ENCODE measurements at regions of chr4 and their contacts with region 1.

Region 1: GRCh38 chr4:5998333-5998936 is 19.8 kb downstream of the C4orf50 start:
- DNase-seq: peak; percentile 77
- CTCF ChIP-seq: peak; percentile 85

Region 2: GRCh38 chr4:5664778-5665177 is 333.7 kb before region 1 on chr4:
- CTCF ChIA-PET with region 1: no interaction called
- POLR2A ChIA-PET with region 1: no interaction called
- DNase-seq: no peak
- CTCF ChIP-seq: no peak

Region 3: DNA sequence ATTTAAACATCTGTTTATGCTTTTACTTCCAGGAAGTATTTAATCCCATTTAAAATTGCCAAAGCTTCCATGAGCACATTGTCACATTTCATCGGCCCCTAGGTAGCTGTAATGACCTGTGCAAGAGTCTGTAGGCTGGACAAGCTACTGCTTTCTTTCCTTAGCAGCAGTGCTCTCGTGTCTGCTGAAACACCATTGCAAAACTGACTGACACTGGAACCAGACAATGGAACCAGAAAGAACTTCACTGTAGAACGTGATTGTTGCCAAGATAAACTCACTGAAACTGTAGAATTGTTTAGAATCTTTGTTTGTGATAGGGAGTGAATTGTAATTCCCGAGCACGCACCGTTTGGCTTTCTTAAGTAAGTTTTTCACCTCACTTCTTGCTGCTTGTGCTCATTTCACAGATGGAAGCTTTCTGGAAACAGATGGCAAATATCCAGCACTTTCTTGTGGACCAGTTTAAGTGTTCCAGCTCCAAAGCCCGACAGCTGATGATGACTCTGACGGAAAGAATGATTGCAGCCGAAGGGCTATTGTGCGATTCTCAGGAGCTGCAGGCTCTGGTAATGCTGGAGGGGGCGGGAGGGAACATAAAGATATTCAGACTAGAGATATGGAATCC is 250.6 kb before region 1 on chr4:
- CTCF ChIA-PET with region 1: no interaction called
- POLR2A ChIA-PET with region 1: no interaction called
- DNase-seq: no peak
- CTCF ChIP-seq: no peak

Region 4: GRCh38 chr4:5900844-5901243 is 97.6 kb before region 1 on chr4:
- CTCF ChIA-PET with region 1: no interaction called
- POLR2A ChIA-PET with region 1: no interaction called
- DNase-seq: no peak
- CTCF ChIP-seq: no peak

Region 5: GRCh38 chr4:5940470-5941203 is 57.8 kb before region 1 on chr4:
- CTCF ChIA-PET with region 1: no interaction called
- POLR2A ChIA-PET with region 1: no interaction called
- DNase-seq: no peak
- CTCF ChIP-seq: no peak

Region 6: GRCh38 chr4:5963611-5964010 is 34.8 kb before region 1 on chr4:
- CTCF ChIA-PET with region 1: interaction called, 10 read pairs
- POLR2A ChIA-PET with region 1: no interaction called
- DNase-seq: no peak
- CTCF ChIP-seq: no peak

Region 7: GRCh38 chr4:5988086-5988845 is 10.2 kb before region 1 on chr4:
- CTCF ChIA-PET with region 1: interaction called, 29 read pairs
- POLR2A ChIA-PET with region 1: no interaction called
- DNase-seq: no peak
- CTCF ChIP-seq: no peak

Region 8: GRCh38 chr4:6019316-6020263 is 21.2 kb after region 1 on chr4:
- CTCF ChIA-PET with region 1: interaction called, 44 read pairs
- POLR2A ChIA-PET with region 1: no interaction called
- DNase-seq: peak; percentile 67
- CTCF ChIP-seq: peak; percentile 73

Region 9: DNA sequence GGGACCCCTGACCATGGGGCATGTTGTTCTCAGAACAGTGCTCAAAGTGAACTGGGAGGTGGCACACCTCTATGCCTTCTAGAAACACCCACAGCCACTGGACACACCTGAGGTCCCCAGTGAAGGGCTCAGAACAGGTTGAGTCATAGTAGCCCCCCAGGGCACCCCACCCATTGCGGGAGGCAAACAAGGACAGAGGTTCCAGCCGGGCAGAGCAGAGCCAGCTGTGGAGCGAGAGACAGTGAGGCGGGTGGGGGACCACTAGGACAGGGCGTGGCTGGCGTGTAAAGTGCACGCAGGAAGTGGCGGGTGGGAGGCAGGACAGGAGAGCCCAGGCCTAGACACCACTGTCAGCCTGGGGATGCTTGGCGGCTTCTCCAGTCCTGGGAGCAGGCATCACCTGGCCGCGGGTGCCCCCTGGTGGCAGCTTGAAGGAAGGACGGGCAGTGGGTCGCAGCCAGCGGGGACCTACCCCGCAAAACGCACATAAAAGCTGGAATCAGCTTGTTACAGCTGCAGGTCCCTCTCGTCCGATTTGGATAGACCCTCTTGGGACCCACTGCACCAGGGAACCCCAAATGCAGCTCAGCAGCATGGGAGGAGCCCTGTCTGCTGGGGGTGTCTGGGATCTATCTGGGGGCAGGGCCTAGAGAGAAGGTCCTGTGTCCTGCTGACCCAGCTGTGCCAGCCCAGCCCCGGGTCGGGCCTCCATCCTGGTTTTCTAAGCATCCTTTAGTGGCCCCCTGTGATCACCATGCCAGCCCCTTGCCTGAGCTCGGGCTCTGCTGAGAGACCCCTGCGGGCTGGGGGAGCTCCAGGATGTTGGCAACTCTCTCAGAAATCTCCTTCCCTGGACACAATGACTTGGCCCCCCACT is 328.8 kb after region 1 on chr4:
- CTCF ChIA-PET with region 1: interaction called, 94 read pairs
- POLR2A ChIA-PET with region 1: no interaction called
- DNase-seq: peak; percentile 90
- CTCF ChIP-seq: peak; percentile 97

Measured in GM10248 (cell line).